ENCODE measurements at regions of chr10 and their contacts with region 1.

Region 1: GRCh38 chr10:29392376-29393021 is 103.6 kb downstream of the LYZL1 start:
- DNase-seq: no peak
- ATAC-seq: no peak
- H3K4me3 ChIP-seq: no peak overlapping the region
- H3K27ac ChIP-seq: no peak overlapping the region
- H3K4me1 ChIP-seq: no peaks in the 10 kb centered on the region
- H3K27me3 ChIP-seq: no peaks in the 10 kb centered on the region

Region 2: GRCh38 chr10:29081951-29082699 is 310.4 kb before region 1 on chr10:
- intact Hi-C with region 1: no loop called
- DNase-seq: no peak
- ATAC-seq: no peak
- H3K4me3 ChIP-seq: no peak overlapping the region
- H3K27ac ChIP-seq: no peak overlapping the region
- H3K4me1 ChIP-seq: no peaks in the 10 kb centered on the region
- H3K27me3 ChIP-seq: no peaks in the 10 kb centered on the region

Region 3: GRCh38 chr10:29430101-29430500 is 37.6 kb after region 1 on chr10:
- intact Hi-C with region 1: no loop called
- DNase-seq: no peak
- ATAC-seq: no peak
- H3K4me3 ChIP-seq: no peak overlapping the region
- H3K27ac ChIP-seq: no peak overlapping the region
- H3K4me1 ChIP-seq: no peaks in the 10 kb centered on the region
- H3K27me3 ChIP-seq: no peaks in the 10 kb centered on the region

Region 4: DNA sequence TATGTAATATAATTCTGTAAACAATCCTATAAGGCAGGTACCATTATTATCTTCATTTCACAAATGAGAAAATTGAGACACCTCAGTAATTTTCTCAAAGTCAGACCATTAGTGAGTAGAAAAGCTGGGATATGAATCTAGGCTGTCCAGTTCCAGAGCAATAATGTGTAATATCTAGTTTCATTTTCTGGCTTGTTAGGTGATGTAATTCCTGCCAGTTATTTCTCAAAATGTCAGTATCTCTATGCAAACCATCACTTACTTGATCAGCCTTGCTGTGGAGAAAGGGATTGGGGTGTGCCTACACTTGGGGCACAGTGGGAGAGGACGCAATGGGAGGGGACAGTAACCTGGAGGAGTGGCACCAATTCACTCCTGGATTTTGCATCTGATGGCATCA is 53.8 kb after region 1 on chr10:
- intact Hi-C with region 1: loop called in 1 of 2 experiments (anchors 5 kb)
- DNase-seq: no peak
- ATAC-seq: no peak
- H3K4me3 ChIP-seq: no peak overlapping the region
- H3K27ac ChIP-seq: no peak overlapping the region
- H3K4me1 ChIP-seq: no peaks in the 10 kb centered on the region
- H3K27me3 ChIP-seq: no peaks in the 10 kb centered on the region

Region 5: GRCh38 chr10:29540016-29540415 is 147.5 kb after region 1 on chr10:
- intact Hi-C with region 1: no loop called
- DNase-seq: no peak
- ATAC-seq: no peak
- H3K4me3 ChIP-seq: no peak overlapping the region
- H3K27ac ChIP-seq: no peak overlapping the region
- H3K4me1 ChIP-seq: peaks cover 3 to 17% of the 10 kb centered on the region in 2 donors
- H3K27me3 ChIP-seq: no peaks in the 10 kb centered on the region